ENCODE measurements at regions of chr2 and their contacts with region 1.

Region 1: DNA sequence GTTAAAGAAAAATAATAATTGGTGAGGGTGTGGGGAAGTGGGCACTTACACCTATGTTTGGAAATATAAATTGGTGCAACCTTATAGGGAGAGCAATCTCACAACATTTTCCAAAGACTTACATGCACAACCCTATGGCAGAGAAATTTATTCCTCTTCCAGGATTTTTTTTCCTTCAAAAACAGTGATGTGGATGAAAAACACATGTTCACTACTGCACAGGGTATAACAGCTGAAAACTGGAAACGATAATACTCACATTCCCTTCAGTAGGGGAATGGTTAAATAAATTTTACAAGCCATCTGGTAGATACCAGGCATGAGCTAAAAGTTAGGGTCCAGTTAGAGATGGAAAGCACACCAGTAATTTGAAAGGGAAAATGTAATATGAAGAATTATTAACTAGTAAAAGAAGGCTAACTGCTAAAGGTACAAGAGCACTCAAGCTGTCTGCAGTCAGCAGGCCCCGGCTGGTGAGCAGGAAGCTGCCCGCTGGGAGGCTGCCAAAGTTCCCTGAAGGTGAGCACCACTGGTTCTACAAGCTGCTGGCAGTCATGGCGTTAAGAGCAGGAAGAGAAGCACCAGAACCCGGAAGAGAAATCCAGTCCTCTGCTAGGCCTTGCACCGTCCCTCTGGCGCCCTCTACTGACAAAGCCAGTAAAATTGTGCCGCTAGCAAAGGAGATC is 28.4 kb upstream of the CASP8 start:
- DNase-seq: peak; percentile 47
- H3K4me3 ChIP-seq: no peak overlapping the region
- CTCF ChIP-seq: peak; percentile 87

Region 2: DNA sequence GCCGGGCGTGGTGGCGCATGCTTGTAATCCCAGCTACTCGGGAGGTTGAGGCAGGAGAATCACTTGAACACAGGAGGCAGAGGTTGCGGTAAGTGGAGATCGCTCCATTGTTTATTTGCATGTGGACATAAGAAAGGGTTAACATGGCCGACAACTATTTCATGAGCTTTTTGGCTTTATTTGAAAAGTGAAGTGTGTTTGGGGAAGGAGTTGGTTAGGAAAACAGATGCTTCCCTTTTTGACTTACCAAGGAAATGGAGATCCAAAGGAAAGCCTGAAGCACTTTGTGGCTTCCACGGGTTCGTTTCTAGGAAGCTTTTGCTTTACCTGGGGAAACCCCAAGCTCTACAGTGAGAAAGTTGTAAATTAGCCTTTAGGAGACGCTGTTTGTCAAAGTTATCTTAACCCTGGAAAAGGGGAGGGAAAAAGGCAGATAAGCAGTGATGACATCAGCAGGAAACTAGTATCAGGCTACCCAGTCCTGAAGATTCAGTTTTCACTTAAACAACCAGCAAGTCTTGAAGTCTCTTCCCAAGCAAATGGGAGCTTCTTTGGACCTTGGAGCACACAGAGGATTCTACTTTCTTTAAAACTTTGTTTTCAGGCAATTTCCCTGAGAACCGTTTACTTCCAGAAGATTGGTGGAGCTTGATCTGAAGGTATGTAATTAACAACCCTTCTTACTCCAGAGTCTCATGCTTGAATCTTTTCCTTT is 49.1 kb before region 1 on chr2 and contains the start of gene CASP10:
- CTCF ChIA-PET with region 1: interaction called, 19 read pairs
- POLR2A ChIA-PET with region 1: no interaction called
- DNase-seq: no peak
- H3K4me3 ChIP-seq: no peak within 1 kb of the TSS
- CTCF ChIP-seq: no peak

Region 3: DNA sequence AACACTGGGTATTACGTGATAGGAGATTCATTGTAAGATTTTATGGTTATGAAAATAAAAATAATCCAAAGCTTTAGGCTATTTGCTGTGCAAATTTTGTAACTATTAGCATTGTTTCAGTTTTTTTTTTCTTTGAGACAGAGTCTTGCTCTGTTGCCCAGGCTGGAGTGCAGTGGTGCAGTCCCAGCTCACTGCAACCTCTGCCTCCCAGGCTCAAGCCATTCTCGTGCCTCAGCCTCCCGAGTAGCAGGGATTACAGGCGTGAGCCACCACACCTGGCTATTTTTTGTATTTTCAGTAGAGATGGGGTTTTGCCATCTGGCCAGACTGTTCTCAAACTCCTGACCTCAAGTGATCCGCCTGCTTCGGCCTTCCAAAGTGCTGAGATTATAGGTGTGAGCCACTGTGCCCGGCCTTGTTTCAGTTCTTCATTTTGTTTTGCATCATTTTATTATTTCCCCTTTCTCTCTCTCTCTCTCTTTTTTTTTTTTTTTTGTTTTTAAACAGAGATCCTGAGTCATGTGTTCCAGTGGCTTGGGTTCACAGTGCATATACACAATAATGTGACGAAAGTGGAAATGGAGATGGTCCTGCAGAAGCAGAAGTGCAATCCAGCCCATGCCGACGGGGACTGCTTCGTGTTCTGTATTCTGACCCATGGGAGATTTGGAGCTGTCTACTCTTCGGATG is 23.2 kb before region 1 on chr2:
- CTCF ChIA-PET with region 1: interaction called, 15 read pairs
- POLR2A ChIA-PET with region 1: no interaction called
- DNase-seq: no peak
- H3K4me3 ChIP-seq: no peak overlapping the region
- CTCF ChIP-seq: no peak

Region 4: GRCh38 chr2:201254081-201254730 is 22.3 kb after region 1 on chr2:
- CTCF ChIA-PET with region 1: interaction called, 12 read pairs
- POLR2A ChIA-PET with region 1: no interaction called
- DNase-seq: no peak
- H3K4me3 ChIP-seq: no peak overlapping the region
- CTCF ChIP-seq: no peak